Naive thymus-derived CD4-positive, alpha-beta T cell (primary cell): ENCODE measurements at regions of chr14 and their contacts with region 1.

Region 1: GRCh38 chr14:23286020-23286905 is at the start of gene HOMEZ:
- DNase-seq: peak; percentile 89 to 97 (median 94)
- ATAC-seq: peak; percentile 99
- H3K4me3 ChIP-seq: peak within 1 kb of the TSS; percentile 84
- H3K4me3 Mint-ChIP-seq: peak within 1 kb of the TSS; percentile 92 to 100 (median 96)
- H3K27ac ChIP-seq: peak within 1 kb of the TSS; percentile 89
- H3K27ac Mint-ChIP-seq: peak within 1 kb of the TSS; percentile 83 to 98 (median 93)
- H3K4me1 ChIP-seq: peaks cover 3 to 6% of the 10 kb centered on the region in 2 donors
- H3K4me1 Mint-ChIP-seq: peaks cover 15 to 37% (median 30%) of the 10 kb centered on the region in 7 donors
- H3K27me3 ChIP-seq: no peaks in the 10 kb centered on the region
- H3K27me3 Mint-ChIP-seq: no peaks in the 10 kb centered on the region
- total RNA-seq, gene HOMEZ: 5.2 to 20.4 (median 15.5) TPM

Region 2: GRCh38 chr14:23228812-23229211 is 57.5 kb before region 1 on chr14:
- CTCF ChIA-PET with region 1: no interaction called
- POLR2A ChIA-PET with region 1: no interaction called
- intact Hi-C with region 1: no loop called
- DNase-seq: no peak
- ATAC-seq: no peak
- H3K4me3 ChIP-seq: no peak overlapping the region
- H3K4me3 Mint-ChIP-seq: no peak overlapping the region
- H3K27ac ChIP-seq: no peak overlapping the region
- H3K27ac Mint-ChIP-seq: no peak overlapping the region
- H3K4me1 ChIP-seq: no peaks in the 10 kb centered on the region
- H3K4me1 Mint-ChIP-seq: no peaks in the 10 kb centered on the region
- H3K27me3 ChIP-seq: no peaks in the 10 kb centered on the region
- H3K27me3 Mint-ChIP-seq: peaks cover 0 to 20% (median 9%) of the 10 kb centered on the region in 5 donors

Region 3: GRCh38 chr14:23346693-23347405 is 60.6 kb after region 1 on chr14:
- CTCF ChIA-PET with region 1: no interaction called
- POLR2A ChIA-PET with region 1: no interaction called
- intact Hi-C with region 1: no loop called
- DNase-seq: no peak
- ATAC-seq: no peak
- H3K4me3 ChIP-seq: no peak overlapping the region
- H3K4me3 Mint-ChIP-seq: no peak overlapping the region
- H3K27ac ChIP-seq: no peak overlapping the region
- H3K27ac Mint-ChIP-seq: no peak overlapping the region
- H3K4me1 ChIP-seq: no peaks in the 10 kb centered on the region
- H3K4me1 Mint-ChIP-seq: peaks cover 4 to 13% (median 8%) of the 10 kb centered on the region in 7 donors
- H3K27me3 ChIP-seq: no peaks in the 10 kb centered on the region
- H3K27me3 Mint-ChIP-seq: peaks cover 0 to 34% (median 11%) of the 10 kb centered on the region in 5 donors

Region 4: GRCh38 chr14:23555882-23556699 is 269.8 kb after region 1 on chr14 and contains the start of gene THTPA:
- CTCF ChIA-PET with region 1: no interaction called
- POLR2A ChIA-PET with region 1: no interaction called
- intact Hi-C with region 1: loop called in 1 of 2 experiments (anchors 1 kb)
- DNase-seq: peak; percentile 84 to 96 (median 89)
- ATAC-seq: peak; percentile 94
- H3K4me3 ChIP-seq: peak within 1 kb of the TSS; percentile 84
- H3K4me3 Mint-ChIP-seq: peak within 1 kb of the TSS; percentile 80 to 99 (median 96)
- H3K27ac ChIP-seq: peak within 1 kb of the TSS; percentile 83
- H3K27ac Mint-ChIP-seq: peak within 1 kb of the TSS; percentile 78 to 97 (median 94)
- H3K4me1 ChIP-seq: peaks cover 10 to 16% of the 10 kb centered on the region in 2 donors
- H3K4me1 Mint-ChIP-seq: peaks cover 18 to 45% (median 38%) of the 10 kb centered on the region in 7 donors
- H3K27me3 ChIP-seq: no peaks in the 10 kb centered on the region
- H3K27me3 Mint-ChIP-seq: peaks cover 0 to under 1% (median 0%) of the 10 kb centered on the region in 5 donors
- total RNA-seq, gene THTPA: 16.4 to 26.7 (median 19.2) TPM